Upper lobe of right lung (tissue), 1 donor: ENCODE measurements at regions of chr9 and their contacts with region 1.

Region 1: GRCh38 chr9:32378993-32379729 is 5.3 kb upstream of the ACO1 start:
- DNase-seq: no peak
- ATAC-seq: peak; percentile 90
- H3K4me3 ChIP-seq: no peak overlapping the region
- H3K27ac ChIP-seq: no peak overlapping the region
- H3K4me1 ChIP-seq: peaks cover 13% of the 10 kb centered on the region
- H3K27me3 ChIP-seq: no peaks in the 10 kb centered on the region
- CTCF ChIP-seq: peak; percentile 82

Region 2: GRCh38 chr9:32326146-32326545 is 53.0 kb before region 1 on chr9:
- intact Hi-C with region 1: no loop called
- DNase-seq: no peak
- ATAC-seq: no peak
- H3K4me3 ChIP-seq: no peak overlapping the region
- H3K27ac ChIP-seq: no peak overlapping the region
- H3K4me1 ChIP-seq: no peaks in the 10 kb centered on the region
- H3K27me3 ChIP-seq: no peaks in the 10 kb centered on the region
- CTCF ChIP-seq: no peak

Region 3: DNA sequence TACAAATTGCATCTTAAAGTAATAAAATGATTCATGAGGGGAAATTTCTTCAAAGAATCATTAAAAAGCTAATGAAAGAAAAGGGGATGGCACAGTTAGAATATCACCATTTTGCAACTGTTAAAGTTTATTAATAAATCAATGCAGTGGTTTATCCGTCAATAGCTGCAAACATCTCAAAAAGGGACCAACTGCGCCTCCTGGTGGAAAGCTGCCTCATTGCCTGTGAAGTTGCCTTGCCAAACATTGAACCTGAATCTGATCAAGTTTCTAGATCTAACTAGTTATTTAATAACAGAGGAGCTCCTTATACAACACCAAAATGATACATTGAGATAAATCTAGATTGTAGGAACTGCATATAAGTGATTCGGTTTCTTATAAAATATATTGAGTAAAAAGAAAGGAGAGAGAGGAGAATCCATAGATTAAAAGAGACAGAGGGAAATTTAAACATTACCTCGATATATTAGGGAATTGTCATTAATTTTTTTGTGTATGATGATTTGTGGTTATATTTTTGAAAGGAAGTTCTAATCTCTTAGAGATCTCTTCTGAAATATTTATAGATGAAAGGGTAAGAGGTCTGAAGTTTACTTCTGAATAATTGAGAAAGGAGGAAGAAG is 200.7 kb after region 1 on chr9:
- intact Hi-C with region 1: loop called (anchors 5 kb)
- DNase-seq: peak; percentile 73
- ATAC-seq: peak; percentile 78
- H3K4me3 ChIP-seq: no peak overlapping the region
- H3K27ac ChIP-seq: no peak overlapping the region
- H3K4me1 ChIP-seq: no peaks in the 10 kb centered on the region
- H3K27me3 ChIP-seq: peaks cover 4% of the 10 kb centered on the region
- CTCF ChIP-seq: peak; percentile 95

Region 4: DNA sequence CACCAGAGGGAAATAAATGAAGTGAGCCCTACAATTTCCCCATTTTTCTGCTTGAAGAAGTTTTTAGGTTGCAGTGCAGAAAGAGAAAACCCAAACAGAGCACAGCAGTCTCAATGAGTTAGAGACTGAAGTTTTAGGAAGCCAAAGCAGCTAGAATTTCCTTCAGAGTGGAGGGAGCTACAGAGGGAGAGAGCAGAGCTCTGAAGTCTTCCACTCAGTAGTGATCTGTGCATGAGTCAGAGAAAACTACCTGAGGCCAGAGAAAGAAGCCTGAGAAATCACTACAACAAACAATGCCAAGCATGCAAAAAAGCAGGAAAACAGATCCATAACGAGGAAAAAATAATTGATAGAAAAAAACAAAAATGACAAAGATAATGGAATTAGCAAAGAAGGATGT is 211.7 kb after region 1 on chr9:
- intact Hi-C with region 1: no loop called
- DNase-seq: no peak
- ATAC-seq: no peak
- H3K4me3 ChIP-seq: no peak overlapping the region
- H3K27ac ChIP-seq: no peak overlapping the region
- H3K4me1 ChIP-seq: no peaks in the 10 kb centered on the region
- H3K27me3 ChIP-seq: no peaks in the 10 kb centered on the region
- CTCF ChIP-seq: no peak

Region 5: GRCh38 chr9:32970554-32970953 is 591.4 kb after region 1 on chr9:
- intact Hi-C with region 1: loop called (anchors 10 kb)
- DNase-seq: no peak
- ATAC-seq: no peak
- H3K4me3 ChIP-seq: no peak overlapping the region
- H3K27ac ChIP-seq: no peak overlapping the region
- H3K4me1 ChIP-seq: no peaks in the 10 kb centered on the region
- H3K27me3 ChIP-seq: no peaks in the 10 kb centered on the region
- CTCF ChIP-seq: no peak